Adrenal gland (tissue), 19 donors: ENCODE measurements at regions of chr6 and their contacts with region 1.

Region 1: DNA sequence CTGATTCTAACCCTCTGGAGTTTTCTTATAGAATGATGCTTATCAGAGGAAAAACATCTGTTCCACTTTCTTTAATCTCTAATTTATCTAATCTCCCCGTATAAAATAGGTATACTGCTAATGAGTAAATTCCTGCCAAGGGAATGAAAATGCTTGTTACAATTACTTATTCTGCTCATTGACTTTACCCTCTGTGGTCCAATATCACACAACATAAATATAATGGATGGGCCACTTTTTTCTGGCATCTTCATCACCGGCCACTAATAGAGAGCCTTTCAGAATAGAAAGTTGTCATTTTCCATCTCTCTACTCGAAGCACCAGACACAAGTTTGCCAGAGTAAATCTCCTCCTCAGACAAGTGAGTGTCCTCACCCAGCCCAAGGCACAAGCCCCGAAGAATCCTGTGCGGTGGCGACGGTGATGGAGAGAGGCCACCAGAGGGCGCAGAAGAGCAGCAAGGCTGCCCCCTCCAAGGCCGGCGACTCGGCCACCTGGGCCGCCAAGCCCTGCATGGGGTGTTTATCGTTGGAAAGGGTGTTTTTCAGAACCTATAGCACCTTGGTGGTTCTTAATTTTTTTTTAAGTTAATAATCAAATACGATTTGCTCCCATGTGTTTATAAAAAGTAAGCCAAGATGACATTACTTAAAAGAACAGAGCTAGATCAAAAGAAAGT is 212.9 kb upstream of the ARID1B start:
- DNase-seq: peak; percentile 56 to 92 (median 82)
- H3K4me3 ChIP-seq: no peak overlapping the region
- H3K27ac ChIP-seq: no peak overlapping the region
- H3K4me1 ChIP-seq: no peaks in the 10 kb centered on the region
- H3K27me3 ChIP-seq: no peaks in the 10 kb centered on the region
- CTCF ChIP-seq: peak; percentile 87 to 96 (median 90)
- POLR2A ChIP-seq: no peak

Region 2: GRCh38 chr6:156634048-156634447 is 69.8 kb after region 1 on chr6:
- intact Hi-C with region 1: no loop called
- DNase-seq: no peak
- H3K4me3 ChIP-seq: no peak overlapping the region
- H3K27ac ChIP-seq: no peak overlapping the region
- H3K4me1 ChIP-seq: peaks cover 0 to 8% of the 10 kb centered on the region in 2 donors
- H3K27me3 ChIP-seq: no peaks in the 10 kb centered on the region
- CTCF ChIP-seq: no peak
- POLR2A ChIP-seq: no peak

Region 3: GRCh38 chr6:156776840-156777576 is 212.7 kb after region 1 on chr6 and contains the start of gene ARID1B:
- intact Hi-C with region 1: loop called (anchors 2 to 5 kb)
- DNase-seq: peak; percentile 74 to 91 (median 87)
- H3K4me3 ChIP-seq: peak within 1 kb of the TSS; percentile 46 to 98 (median 81)
- H3K27ac ChIP-seq: peak within 1 kb of the TSS; percentile 93 to 98 (median 96)
- H3K4me1 ChIP-seq: peaks cover 21 to 29% of the 10 kb centered on the region in 2 donors
- H3K27me3 ChIP-seq: no peaks in the 10 kb centered on the region
- CTCF ChIP-seq: peak in 1 of 6 experiments; percentile 12
- POLR2A ChIP-seq: peak; percentile 79 to 83
- total RNA-seq, gene ARID1B: 36.8 to 85.6 (median 64.0) TPM